ENCODE measurements at regions of chr12 and their contacts with region 1.

Region 1: DNA sequence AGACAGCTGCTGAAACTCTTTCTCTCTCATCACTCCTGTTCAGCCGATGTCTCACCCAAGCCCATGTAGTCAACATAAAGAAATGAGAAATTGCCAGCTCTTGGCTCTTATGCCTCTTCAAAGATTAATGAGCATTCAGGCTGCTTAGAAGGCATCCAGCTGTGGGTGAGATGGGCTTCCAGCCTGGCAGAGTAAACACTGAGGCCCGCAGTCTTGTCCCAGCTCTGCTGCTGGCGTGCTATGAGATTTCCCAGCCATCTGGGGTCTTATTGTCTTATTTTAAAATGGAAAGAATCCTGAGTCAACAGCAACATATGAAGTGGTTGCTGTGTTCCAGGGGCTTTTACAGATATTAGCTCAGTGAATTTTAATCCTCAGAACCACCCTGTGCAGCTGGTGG is 12.6 kb downstream of the RXYLT1 start:
- DNase-seq: no peak
- H3K4me3 ChIP-seq: no peak overlapping the region
- H3K27ac ChIP-seq: no peak overlapping the region
- H3K4me1 ChIP-seq: peaks cover 4% of the 10 kb centered on the region; the same call in 1 of the 2 replicates
- H3K27me3 ChIP-seq: no peaks in the 10 kb centered on the region

Region 2: GRCh38 chr12:63668028-63668799 is 124.1 kb before region 1 on chr12 and contains the start of gene DPY19L2:
- in situ Hi-C with region 1: loop called (anchors 10 kb)
- DNase-seq: peak; percentile 42
- H3K4me3 ChIP-seq: peak within 1 kb of the TSS; percentile 82
- H3K27ac ChIP-seq: no peak within 1 kb of the TSS
- H3K4me1 ChIP-seq: no peaks in the 10 kb centered on the region
- H3K27me3 ChIP-seq: peaks cover 10% of the 10 kb centered on the region
- total RNA-seq, gene DPY19L2: 0.43 TPM in 1 of 2 replicates, not detected in the other

Region 3: DNA sequence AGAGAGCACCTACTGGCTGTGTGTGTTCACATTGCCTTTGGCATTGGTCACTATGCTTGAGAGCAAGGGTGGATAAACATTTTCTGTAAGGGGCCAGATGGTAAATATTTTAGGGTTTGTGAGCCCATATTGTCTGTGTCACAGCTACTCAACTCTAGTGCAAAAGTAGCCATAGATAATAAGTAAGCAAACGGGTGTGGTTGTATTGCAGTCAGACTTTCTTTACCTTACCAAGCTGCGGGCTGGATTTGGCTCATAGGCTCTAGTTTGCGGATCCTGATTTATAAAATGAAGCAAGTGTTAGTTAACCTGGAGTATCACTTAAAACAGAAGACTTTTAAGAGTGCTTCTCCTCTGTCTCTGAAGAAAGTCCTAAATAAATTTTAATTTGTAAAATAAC is 260.8 kb after region 1 on chr12:
- in situ Hi-C with region 1: no loop called
- DNase-seq: no peak
- H3K4me3 ChIP-seq: no peak overlapping the region
- H3K27ac ChIP-seq: no peak overlapping the region
- H3K4me1 ChIP-seq: no peaks in the 10 kb centered on the region
- H3K27me3 ChIP-seq: no peaks in the 10 kb centered on the region

Measured in GM23248 (cell line).